ENCODE measurements at regions of chr11 and their contacts with region 1.

Region 1: GRCh38 chr11:112219476-112220232 is 6.6 kb upstream of the PTS start:
- DNase-seq: peak; percentile 20 to 22
- H3K4me3 ChIP-seq: no peak overlapping the region
- H3K27ac ChIP-seq: no peak overlapping the region
- H3K4me1 ChIP-seq: peaks cover 0 to 12% of the 10 kb centered on the region in 2 donors
- H3K27me3 ChIP-seq: no peaks in the 10 kb centered on the region
- CTCF ChIP-seq: peak; percentile 55 to 93 (median 74)
- POLR2A ChIP-seq: no peak

Region 2: DNA sequence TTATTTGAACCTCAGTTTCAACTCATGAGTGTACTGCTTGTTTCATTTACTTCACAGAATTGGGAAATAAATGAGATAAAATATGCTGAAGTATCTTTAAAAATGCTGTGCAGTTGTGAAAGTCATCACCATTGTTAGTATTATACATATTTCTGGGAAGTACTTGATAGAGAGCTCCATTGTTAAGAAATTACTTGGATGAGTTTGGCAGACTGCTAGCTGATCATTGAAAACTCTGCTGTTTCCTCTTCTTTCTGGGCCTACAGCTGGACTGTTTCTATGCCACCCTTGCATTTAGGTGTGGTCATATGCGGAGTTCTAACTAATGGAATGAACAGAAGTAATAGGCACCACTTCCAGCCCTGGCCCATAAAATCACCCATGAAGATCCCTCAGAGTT is 607.4 kb before region 1 on chr11:
- intact Hi-C with region 1: no loop called
- DNase-seq: no peak
- H3K4me3 ChIP-seq: no peak overlapping the region
- H3K27ac ChIP-seq: no peak overlapping the region
- H3K4me1 ChIP-seq: peaks cover 3 to 5% of the 10 kb centered on the region in 2 donors
- H3K27me3 ChIP-seq: no peaks in the 10 kb centered on the region
- CTCF ChIP-seq: no peak
- POLR2A ChIP-seq: no peak

Region 3: GRCh38 chr11:112280268-112281126 is 60.8 kb after region 1 on chr11:
- intact Hi-C with region 1: loop called (anchors 2 kb)
- DNase-seq: peak; percentile 60 to 66
- H3K4me3 ChIP-seq: peak overlapping the region in 1 of 3 donors; percentile 30
- H3K27ac ChIP-seq: peak overlapping the region in 2 of 3 donors; percentile 30 to 40
- H3K4me1 ChIP-seq: peaks cover 0 to 4% of the 10 kb centered on the region in 2 donors
- H3K27me3 ChIP-seq: no peaks in the 10 kb centered on the region
- CTCF ChIP-seq: peak; percentile 34 to 82 (median 60)
- POLR2A ChIP-seq: no peak

Region 4: GRCh38 chr11:112470355-112470754 is 250.7 kb after region 1 on chr11:
- intact Hi-C with region 1: no loop called
- DNase-seq: no peak
- H3K4me3 ChIP-seq: no peak overlapping the region
- H3K27ac ChIP-seq: no peak overlapping the region
- H3K4me1 ChIP-seq: no peaks in the 10 kb centered on the region
- H3K27me3 ChIP-seq: no peaks in the 10 kb centered on the region
- CTCF ChIP-seq: no peak
- POLR2A ChIP-seq: no peak

Region 5: GRCh38 chr11:113532697-113533424 is 1313.2 kb after region 1 on chr11:
- intact Hi-C with region 1: loop called (anchors 5 kb)
- DNase-seq: peak; percentile 78 to 79
- H3K4me3 ChIP-seq: no peak overlapping the region
- H3K27ac ChIP-seq: no peak overlapping the region
- H3K4me1 ChIP-seq: no peaks in the 10 kb centered on the region
- H3K27me3 ChIP-seq: no peaks in the 10 kb centered on the region
- CTCF ChIP-seq: peak; percentile 65 to 87 (median 72)
- POLR2A ChIP-seq: no peak